ENCODE measurements at regions of chr5 and their contacts with region 1.

Region 1: DNA sequence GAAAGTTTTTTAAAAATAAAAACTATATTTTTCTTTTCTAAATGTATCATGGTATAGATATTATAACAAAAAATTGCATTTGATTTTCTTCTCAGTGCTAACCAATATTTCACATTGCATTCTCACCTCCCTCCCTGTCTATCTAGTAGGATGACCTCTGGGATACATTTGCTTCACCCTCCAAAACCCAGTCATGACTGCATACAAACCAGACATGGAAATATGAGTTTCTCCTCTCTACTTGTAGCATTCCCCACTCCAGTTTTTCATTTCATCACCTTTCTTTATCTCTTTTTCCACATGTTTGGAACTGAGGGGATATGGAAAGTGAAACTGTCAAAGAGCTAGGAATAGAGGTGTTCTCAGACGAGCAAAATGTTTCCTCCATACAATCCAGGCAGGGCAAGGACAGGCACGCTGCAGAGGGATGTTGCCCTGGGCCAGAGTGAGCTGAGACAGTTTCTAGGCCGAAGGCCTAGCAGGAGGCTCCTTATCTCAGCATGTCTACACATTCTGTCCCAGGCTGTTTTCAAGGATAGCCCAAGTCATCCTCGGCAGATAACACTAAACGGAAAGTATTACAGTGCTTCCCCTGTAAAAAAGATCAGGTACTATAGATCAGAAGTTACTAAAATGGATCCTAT is 46.7 kb downstream of the MEF2C start:
- DNase-seq: no peak
- H3K4me3 ChIP-seq: peak overlapping the region; percentile 11 to 37 (median 26)
- H3K27ac ChIP-seq: peak overlapping the region; percentile 78 to 85 (median 80)
- H3K4me1 ChIP-seq: peaks cover 0 to 42% (median 28%) of the 10 kb centered on the region in 4 donors
- H3K27me3 ChIP-seq: no peaks in the 10 kb centered on the region
- CTCF ChIP-seq: no peak
- EP300 ChIP-seq: no peak
- POLR2A ChIP-seq: no peak

Region 2: GRCh38 chr5:88883059-88883835 is 46.9 kb after region 1 on chr5 and contains the start of gene MEF2C:
- intact Hi-C with region 1: loop called (anchors 2 kb)
- DNase-seq: peak; percentile 88
- H3K4me3 ChIP-seq: peak within 1 kb of the TSS; percentile 57 to 65 (median 60)
- H3K27ac ChIP-seq: peak within 1 kb of the TSS; percentile 87 to 93 (median 88)
- H3K4me1 ChIP-seq: peaks cover 0 to 67% (median 43%) of the 10 kb centered on the region in 4 donors
- H3K27me3 ChIP-seq: no peaks in the 10 kb centered on the region
- CTCF ChIP-seq: no peak
- EP300 ChIP-seq: no peak
- POLR2A ChIP-seq: peak; percentile 38 to 80
- total RNA-seq, gene MEF2C: 32.1 to 51.4 (median 40.2) TPM

Region 3: DNA sequence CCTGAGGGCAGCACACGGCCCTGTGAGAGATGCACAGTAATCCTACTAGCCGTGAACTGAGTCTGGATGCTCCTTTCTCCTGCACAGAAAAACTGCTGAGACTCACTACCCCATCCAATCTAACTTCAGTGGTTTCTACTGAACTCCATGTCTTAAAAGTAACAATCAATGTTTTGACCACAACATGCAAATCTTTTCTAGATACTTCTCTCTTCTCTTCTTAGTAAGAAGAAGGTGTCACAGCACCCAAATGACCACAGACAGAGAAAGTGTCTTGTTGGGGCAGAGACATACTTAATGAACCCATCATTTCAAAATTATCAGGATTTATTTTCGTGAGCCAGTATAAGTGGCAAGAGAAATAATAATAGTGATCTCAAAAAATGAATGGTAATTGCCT is 332.4 kb after region 1 on chr5:
- intact Hi-C with region 1: no loop called
- DNase-seq: no peak
- H3K4me3 ChIP-seq: no peak overlapping the region
- H3K27ac ChIP-seq: no peak overlapping the region
- H3K4me1 ChIP-seq: no peaks in the 10 kb centered on the region
- H3K27me3 ChIP-seq: no peaks in the 10 kb centered on the region
- CTCF ChIP-seq: no peak
- EP300 ChIP-seq: no peak
- POLR2A ChIP-seq: no peak